Right ventricle myocardium inferior (tissue), 1 donor: ENCODE measurements at regions of chr11 and their contacts with region 1.

Region 1: GRCh38 chr11:9534791-9535781 is 38.4 kb upstream of the WEE1 start:
- DNase-seq: peak; percentile 81
- ATAC-seq: peak; percentile 73

Region 2: GRCh38 chr11:9493492-9493891 is 41.6 kb before region 1 on chr11:
- intact Hi-C with region 1: no loop called
- DNase-seq: no peak
- ATAC-seq: no peak

Region 3: DNA sequence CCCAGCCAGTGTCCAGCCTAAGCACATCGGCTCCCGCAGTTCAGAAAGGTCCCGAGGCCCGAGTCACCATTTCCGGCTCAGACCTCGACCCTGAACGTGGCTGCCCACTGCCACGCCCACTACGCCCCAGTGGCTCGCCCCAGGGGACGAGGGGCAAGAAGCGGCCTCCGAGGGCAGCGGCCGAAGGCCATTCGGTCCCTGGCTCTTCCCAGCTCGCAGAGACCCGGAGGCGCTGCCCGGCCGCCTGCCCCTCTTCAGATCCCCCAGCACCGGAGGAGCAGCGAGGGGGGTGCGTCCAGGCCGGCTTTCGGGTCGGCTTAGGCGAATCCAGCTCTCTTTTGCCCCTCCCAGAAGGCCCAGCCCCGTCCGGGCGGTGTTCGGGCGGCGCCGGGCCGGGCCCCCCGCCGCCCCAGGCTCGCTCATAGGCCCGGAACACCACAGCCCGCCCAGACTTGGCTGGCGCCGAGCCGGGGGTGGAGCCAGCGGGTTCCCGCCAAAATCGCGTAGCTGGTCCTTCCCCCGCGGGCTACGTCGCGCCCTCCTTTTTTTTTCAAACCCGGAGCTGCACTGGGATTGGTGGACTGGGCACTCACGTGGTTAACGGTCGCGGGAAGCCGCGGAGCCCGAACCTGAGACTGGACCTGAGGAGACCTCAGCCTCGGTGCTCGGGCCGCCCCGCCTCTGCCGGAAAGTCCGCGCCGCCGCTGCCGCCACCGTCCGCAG is 38.1 kb after region 1 on chr11 and contains the start of gene WEE1:
- intact Hi-C with region 1: loop called (anchors 5 kb)
- DNase-seq: peak; percentile 98
- ATAC-seq: peak; percentile 97
- total RNA-seq, gene WEE1: 40.1 TPM

Region 4: GRCh38 chr11:9748361-9748970 is 213.4 kb after region 1 on chr11:
- intact Hi-C with region 1: loop called (anchors 5 kb)
- DNase-seq: no peak
- ATAC-seq: peak; percentile 88